ENCODE measurements at regions of chr1 and their contacts with region 1.

Region 1: DNA sequence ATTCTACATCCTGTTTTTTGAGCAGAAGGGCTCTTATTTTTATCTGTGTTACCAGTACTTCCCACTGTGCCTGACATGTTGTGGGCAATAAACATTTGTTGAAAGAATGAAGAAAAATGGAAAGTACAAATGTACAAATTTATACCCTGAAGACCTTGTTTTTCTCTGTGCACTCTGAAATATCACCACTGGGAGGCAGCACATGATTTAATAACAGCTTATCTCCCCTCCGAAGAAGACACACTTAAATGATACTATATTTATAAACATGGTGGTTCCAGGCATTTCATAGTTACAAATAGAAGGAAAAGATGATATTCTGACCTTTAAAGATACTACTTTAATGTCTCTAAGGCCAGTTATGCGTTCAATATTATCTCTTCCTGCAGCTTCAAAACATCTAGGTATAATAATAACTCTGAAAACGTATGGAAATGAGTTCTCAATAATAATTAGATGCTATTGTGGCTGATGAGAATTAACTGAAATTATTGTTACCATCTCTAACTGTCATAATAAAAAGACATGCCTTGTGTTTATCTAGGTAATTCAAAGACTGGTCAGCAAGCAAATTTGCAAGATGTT is 12.8 kb downstream of the DYNLT5 start:
- DNase-seq: peak; percentile 24
- ATAC-seq: peak; percentile 56; the same call in 2 of the 3 replicates
- H3K4me3 ChIP-seq: no peak overlapping the region
- H3K27ac ChIP-seq: no peak overlapping the region
- H3K4me1 ChIP-seq: no peaks in the 10 kb centered on the region
- H3K27me3 ChIP-seq: no peaks in the 10 kb centered on the region
- CTCF ChIP-seq: peak; percentile 67
- EP300 ChIP-seq: no peak
- POLR2A ChIP-seq: no peak
- RAD21 ChIP-seq: peak; percentile 30; the same call in 1 of the 2 replicates

Region 2: GRCh38 chr1:66752000-66752592 is 13.0 kb before region 1 on chr1 and contains the start of gene DYNLT5:
- CTCF ChIA-PET with region 1: no interaction called
- POLR2A ChIA-PET with region 1: no interaction called
- in situ Hi-C with region 1: no loop called
- intact Hi-C with region 1: no loop called
- DNase-seq: no peak
- ATAC-seq: peak; percentile 85
- H3K4me3 ChIP-seq: no peak within 1 kb of the TSS
- H3K27ac ChIP-seq: no peak within 1 kb of the TSS
- H3K4me1 ChIP-seq: no peaks in the 10 kb centered on the region
- H3K27me3 ChIP-seq: peaks cover 0 to 4% of the 10 kb centered on the region in 2 experiments; a peak in 1 of 5 replicates
- CTCF ChIP-seq: no peak
- EP300 ChIP-seq: no peak
- POLR2A ChIP-seq: no peak
- RAD21 ChIP-seq: no peak
- total RNA-seq, gene DYNLT5: not detected in 2 replicates

Region 3: GRCh38 chr1:66809736-66810326 is 44.7 kb after region 1 on chr1:
- CTCF ChIA-PET with region 1: no interaction called
- POLR2A ChIA-PET with region 1: no interaction called
- in situ Hi-C with region 1: no loop called
- intact Hi-C with region 1: loop called (anchors 2 kb)
- DNase-seq: no peak
- ATAC-seq: no peak
- H3K4me3 ChIP-seq: no peak overlapping the region
- H3K27ac ChIP-seq: no peak overlapping the region
- H3K4me1 ChIP-seq: no peaks in the 10 kb centered on the region
- H3K27me3 ChIP-seq: no peaks in the 10 kb centered on the region
- CTCF ChIP-seq: no peak
- EP300 ChIP-seq: no peak
- POLR2A ChIP-seq: no peak
- RAD21 ChIP-seq: no peak

Region 4: DNA sequence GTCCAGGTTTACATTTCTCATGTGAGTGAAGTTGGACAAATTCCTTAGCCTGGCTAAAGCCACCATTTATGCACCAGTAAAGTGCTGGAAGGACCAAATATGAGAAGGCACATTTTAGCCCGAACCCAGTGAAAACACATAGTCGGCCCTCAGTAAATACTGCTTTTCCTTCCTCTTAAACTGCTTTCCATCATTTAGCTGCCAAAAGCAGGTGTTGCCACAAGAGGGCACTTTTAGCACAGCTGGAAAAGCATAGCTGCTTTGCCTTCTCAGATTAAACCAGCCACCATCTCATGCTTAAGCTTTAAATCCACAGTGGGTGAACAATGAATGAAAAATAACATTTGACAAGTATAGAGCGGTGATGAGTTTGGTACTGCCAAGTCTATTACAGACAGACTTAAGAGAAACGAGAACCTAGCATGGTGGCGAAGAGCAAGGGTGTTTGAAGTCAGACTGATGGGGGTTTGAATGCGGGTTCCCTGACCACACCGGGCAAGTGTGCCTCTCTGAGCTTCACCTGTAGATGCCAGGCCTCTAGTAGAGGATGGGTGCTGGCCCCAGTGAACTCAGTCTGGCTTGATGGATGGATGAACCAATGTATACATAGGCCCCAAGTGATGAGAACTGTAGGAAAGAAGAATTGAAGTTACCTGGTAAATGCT is 231.1 kb after region 1 on chr1:
- CTCF ChIA-PET with region 1: no interaction called
- POLR2A ChIA-PET with region 1: no interaction called
- in situ Hi-C with region 1: no loop called
- intact Hi-C with region 1: loop called (anchors 2 kb)
- DNase-seq: peak; percentile 46
- ATAC-seq: peak; percentile 80
- H3K4me3 ChIP-seq: no peak overlapping the region
- H3K27ac ChIP-seq: no peak overlapping the region
- H3K4me1 ChIP-seq: peaks cover 9% of the 10 kb centered on the region; the same call in 1 of the 2 replicates
- H3K27me3 ChIP-seq: no peaks in the 10 kb centered on the region
- CTCF ChIP-seq: peak; percentile 76
- EP300 ChIP-seq: no peak
- POLR2A ChIP-seq: no peak
- RAD21 ChIP-seq: peak; percentile 70